Upper lobe of right lung (tissue), 1 donor: ENCODE measurements at regions of chr15 and their contacts with region 1.

Region 1: DNA sequence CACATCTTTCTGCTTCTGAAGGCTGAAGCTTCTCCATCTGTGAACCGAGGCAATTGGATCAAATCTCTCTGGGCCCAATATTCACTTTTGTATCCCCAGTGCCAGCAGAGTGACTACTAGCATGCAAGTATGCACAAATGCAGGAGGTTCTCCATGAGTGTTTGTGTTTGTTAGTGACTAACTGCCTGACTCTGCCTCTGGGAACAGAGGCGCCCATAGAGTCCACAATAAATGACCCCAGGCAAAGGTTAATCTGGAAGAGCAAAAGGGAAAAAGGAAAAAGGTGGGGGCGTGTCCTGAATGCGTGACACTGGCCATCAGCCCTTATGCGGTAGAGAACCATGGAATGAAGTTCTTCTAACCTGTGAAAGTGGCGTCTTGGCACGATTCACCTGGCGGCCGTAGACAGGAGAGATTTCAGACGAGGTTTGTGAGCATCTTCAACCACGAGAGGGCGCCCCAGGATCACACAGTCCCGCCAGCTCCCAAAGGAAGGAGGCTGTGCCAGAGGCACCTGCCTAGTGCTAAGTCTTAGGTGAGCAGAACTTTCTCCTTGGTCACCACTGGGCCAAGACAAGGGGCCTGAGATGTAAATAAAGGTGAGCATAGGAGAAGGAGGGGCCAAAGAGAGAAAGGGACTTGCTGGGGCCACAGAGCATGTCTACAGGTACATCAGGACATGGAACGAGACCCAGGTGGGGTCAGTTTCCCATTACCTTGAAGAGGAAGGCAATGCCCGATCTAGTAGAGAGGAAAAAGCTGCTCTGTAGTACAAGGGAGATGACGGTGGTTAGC is 44.2 kb downstream of the RBPMS2 start:
- DNase-seq: peak; percentile 91
- ATAC-seq: peak; percentile 94
- H3K4me3 ChIP-seq: no peak overlapping the region
- H3K27ac ChIP-seq: no peak overlapping the region
- H3K4me1 ChIP-seq: no peaks in the 10 kb centered on the region
- H3K27me3 ChIP-seq: no peaks in the 10 kb centered on the region
- CTCF ChIP-seq: peak; percentile 88

Region 2: GRCh38 chr15:64571857-64572291 is 159.3 kb before region 1 on chr15:
- intact Hi-C with region 1: no loop called
- DNase-seq: no peak
- ATAC-seq: peak; percentile 47
- H3K4me3 ChIP-seq: no peak overlapping the region
- H3K27ac ChIP-seq: no peak overlapping the region
- H3K4me1 ChIP-seq: peaks cover 14% of the 10 kb centered on the region
- H3K27me3 ChIP-seq: no peaks in the 10 kb centered on the region
- CTCF ChIP-seq: no peak

Region 3: GRCh38 chr15:64681424-64682024 is 49.7 kb before region 1 on chr15:
- intact Hi-C with region 1: loop called (anchors 5 kb)
- DNase-seq: no peak
- ATAC-seq: peak; percentile 91
- H3K4me3 ChIP-seq: no peak overlapping the region
- H3K27ac ChIP-seq: no peak overlapping the region
- H3K4me1 ChIP-seq: no peaks in the 10 kb centered on the region
- H3K27me3 ChIP-seq: no peaks in the 10 kb centered on the region
- CTCF ChIP-seq: peak; percentile 68

Region 4: DNA sequence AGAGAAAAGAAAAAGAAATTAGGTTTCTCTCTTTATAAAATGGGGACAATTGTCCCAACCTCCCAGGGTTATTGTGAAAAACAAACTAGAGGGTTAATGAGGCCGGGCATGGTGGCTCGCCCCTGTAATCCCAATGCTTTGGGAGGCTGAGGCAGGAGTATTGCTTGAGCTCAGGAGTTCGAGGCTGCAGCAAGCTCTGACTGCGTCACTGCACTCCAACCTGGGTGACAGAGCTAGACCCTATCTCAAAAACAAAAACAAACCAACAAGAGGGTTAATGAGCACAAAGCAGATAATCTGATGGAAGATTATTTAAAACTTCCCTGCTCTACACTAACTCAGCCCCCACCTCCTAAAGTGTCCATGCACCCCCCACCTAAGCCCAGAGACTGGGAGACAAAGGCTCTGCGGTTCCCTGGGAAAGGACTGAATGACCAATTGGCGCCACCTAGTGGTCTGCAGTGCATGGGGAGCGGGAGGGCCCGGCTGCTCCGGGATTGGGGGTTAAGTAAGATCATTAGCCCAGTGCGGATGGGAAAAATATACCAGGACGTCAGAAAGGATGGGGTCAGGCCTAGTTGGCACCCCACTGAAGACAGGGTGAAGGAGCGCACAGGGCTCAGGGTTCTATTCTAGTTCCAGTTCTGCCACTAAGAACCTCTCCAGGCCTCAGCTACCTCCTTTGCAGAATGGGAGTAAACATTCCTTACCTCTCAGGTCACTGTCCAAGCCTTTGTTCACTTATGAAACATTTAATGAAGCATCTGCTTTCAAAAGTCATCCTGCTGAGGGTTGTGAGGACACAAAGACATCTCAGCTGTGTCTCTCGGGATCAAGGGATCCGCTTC is 78.7 kb after region 1 on chr15:
- intact Hi-C with region 1: loop called (anchors 5 kb)
- DNase-seq: peak; percentile 86
- ATAC-seq: peak; percentile 92
- H3K4me3 ChIP-seq: no peak overlapping the region
- H3K27ac ChIP-seq: no peak overlapping the region
- H3K4me1 ChIP-seq: no peaks in the 10 kb centered on the region
- H3K27me3 ChIP-seq: no peaks in the 10 kb centered on the region
- CTCF ChIP-seq: peak; percentile 88

Region 5: DNA sequence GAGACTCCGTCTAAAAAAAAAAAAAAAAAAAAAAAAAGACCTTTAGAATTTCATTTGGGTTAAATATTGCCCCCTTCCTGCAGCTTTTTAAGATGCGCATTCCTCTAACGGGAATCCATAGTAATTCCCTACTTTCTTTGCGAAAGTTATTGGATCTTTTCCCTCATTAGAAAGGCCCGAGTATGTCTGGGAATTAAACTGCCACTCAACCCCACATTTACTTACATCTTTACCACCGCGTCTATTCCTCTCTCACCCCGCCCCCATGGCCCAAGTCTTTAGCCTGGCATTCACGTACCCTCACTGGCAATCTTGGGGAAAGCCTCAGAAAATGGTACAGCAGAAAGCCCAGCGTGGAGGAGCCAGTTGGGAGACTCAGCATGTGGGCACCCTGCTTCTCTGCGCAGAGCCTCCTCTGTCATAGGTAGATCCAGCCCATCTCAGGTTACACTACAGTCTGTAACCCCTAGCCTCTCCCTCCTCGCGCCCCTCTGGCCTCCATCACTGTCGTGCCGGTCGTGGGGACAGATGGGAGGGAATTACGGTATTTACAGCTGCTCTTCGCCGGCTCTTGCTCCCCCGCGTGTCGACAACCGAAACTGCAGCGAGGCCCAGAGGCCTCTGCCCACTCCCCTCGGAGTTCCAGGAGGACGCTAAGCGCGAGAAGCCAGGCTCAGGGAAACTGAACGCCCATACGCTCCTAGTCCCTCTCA is 174.1 kb after region 1 on chr15:
- intact Hi-C with region 1: loop called (anchors 5 kb)
- DNase-seq: peak; percentile 89
- ATAC-seq: peak; percentile 97
- H3K4me3 ChIP-seq: peak overlapping the region; percentile 28
- H3K27ac ChIP-seq: no peak overlapping the region
- H3K4me1 ChIP-seq: peaks cover 6% of the 10 kb centered on the region
- H3K27me3 ChIP-seq: no peaks in the 10 kb centered on the region
- CTCF ChIP-seq: peak; percentile 91